Activated CD4-positive, alpha-beta T cell treated with anti-CD3 and anti-CD28 coated beads, Interleukin-2, amount 10 ng/mL, durations not matched to agents 24 days and 14 days (primary cell): ENCODE measurements at regions of chr6 and their contacts with region 1.

Region 1: DNA sequence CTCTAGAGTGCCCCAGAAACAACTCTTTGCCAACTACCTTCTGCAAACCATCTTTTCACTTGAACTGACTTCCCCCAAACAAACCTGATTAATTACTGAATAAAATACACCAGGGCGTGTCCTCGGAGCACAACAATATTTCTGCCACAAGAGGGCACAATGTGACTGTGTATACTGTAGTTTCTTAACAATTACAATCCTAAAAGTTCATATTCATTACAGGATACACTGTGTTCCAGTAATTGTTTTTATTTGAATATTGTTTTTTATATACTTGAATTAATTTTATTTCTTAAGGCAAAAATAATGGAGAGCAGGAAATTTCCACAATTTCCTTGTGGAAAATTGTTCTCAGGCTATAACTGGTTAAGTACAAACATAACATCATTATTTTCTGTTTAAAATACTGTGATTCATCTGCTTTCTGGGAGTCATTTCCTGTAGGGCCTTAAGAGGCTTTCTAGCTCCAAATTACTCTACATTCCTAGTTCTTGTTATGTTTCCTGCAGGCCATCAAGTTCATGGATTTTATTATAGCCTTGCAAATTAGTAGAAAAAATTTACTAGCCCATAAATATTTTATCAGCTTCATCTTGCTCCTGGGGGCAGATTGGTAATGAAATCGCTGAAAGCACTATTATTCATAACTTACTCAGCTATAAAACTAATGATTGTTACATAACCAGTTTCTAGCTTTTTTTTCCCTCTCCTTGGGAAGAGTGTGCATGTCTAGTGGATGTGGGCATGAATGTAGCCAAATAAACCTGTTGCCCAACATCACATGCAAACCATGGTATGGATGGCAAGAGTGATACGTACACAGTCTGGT is 51.9 kb upstream of the SLC22A16 start:
- DNase-seq: peak; percentile 86
- H3K4me3 Mint-ChIP-seq: no peak overlapping the region
- H3K27ac Mint-ChIP-seq: no peak overlapping the region
- H3K4me1 Mint-ChIP-seq: peaks cover 11% of the 10 kb centered on the region
- H3K27me3 Mint-ChIP-seq: no peaks in the 10 kb centered on the region

Region 2: DNA sequence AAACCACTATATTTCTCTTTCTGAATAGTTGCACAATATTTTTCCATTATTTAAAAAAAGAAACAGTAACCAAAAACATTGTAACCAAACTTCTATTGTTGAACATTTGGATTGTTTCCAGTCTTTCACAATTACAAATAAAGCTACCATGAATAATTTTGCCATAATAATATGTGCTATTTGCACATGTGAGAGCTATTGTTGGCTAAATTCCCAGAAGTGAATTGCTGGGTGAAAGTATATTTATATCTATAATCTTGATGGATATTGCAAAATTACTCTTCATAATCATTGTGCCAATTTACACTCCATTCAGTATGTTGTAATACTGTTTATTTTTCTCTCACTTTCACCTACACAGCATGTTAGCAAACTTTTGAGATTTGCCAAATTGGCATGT is 15.3 kb before region 1 on chr6:
- intact Hi-C with region 1: no loop called
- DNase-seq: no peak
- H3K4me3 Mint-ChIP-seq: no peak overlapping the region
- H3K27ac Mint-ChIP-seq: no peak overlapping the region
- H3K4me1 Mint-ChIP-seq: no peaks in the 10 kb centered on the region
- H3K27me3 Mint-ChIP-seq: peaks cover 28% of the 10 kb centered on the region

Region 3: GRCh38 chr6:110543106-110543505 is 14.8 kb after region 1 on chr6:
- intact Hi-C with region 1: no loop called
- DNase-seq: no peak
- H3K4me3 Mint-ChIP-seq: no peak overlapping the region
- H3K27ac Mint-ChIP-seq: no peak overlapping the region
- H3K4me1 Mint-ChIP-seq: peaks cover 13% of the 10 kb centered on the region
- H3K27me3 Mint-ChIP-seq: peaks cover 15% of the 10 kb centered on the region

Region 4: DNA sequence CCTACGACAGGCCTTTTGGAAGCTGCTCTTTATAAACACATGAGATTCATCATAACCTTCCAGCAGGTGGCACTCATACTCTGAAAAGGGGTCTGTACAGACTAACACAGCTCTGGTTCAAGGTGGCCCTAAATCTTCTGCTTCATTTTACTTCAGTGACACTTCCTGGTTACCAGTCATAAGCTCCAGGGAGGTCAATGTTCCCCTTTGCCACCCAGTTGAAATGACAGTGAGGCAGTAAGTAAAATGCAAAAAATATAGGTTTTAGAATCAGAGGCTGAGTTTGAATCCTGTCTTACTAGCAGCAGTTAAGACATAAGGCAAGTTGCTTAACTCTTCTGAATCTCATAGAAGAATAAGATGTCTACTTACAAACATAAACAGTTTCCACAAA is 154.1 kb after region 1 on chr6:
- intact Hi-C with region 1: loop called (anchors 2 kb)
- DNase-seq: peak; percentile 92
- H3K4me3 Mint-ChIP-seq: no peak overlapping the region
- H3K27ac Mint-ChIP-seq: no peak overlapping the region
- H3K4me1 Mint-ChIP-seq: peaks cover 14% of the 10 kb centered on the region
- H3K27me3 Mint-ChIP-seq: no peaks in the 10 kb centered on the region

Region 5: DNA sequence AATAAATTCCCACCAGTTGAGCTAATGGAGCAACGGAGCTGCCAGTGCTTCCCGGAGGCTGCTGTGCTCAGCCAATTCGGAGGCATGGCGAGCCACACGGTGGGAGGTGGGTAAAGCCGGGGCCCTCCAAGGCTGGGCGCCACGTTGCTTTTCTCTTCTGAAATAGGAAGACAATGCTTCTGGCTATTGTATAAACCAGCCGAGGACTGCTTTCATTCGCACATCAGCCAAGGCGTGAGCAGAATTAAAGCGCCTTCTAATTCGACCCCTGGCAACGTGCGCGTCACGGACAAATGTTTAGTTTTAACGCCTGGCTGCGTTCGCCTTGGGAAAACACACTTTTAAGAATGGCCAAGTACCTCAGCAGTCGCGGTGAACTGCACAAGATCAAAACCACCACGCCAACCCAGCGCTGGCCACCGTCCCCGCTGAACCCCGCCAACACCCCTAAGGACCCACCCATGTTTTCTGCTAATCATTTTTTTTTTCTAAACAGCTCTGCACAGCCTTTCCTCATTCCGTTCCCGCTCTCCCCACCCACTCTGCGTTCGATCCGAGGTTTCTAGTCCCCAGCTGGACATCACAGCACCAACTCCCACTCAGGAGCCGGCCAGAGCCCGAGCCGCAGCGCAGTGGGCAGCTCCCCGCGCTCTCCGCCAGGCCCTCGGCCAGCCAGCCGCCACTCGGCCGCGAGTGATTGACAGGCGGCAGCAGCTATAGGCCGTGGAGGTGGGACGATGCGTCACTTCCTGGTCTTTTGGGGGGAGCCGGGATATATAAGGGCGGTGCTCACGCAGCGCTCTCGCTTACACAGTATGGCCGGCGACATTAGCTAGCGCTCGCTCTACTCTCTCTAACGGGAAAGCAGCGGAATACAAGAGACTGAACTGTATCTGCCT is 345.9 kb after region 1 on chr6 and contains the start of gene AMD1:
- intact Hi-C with region 1: loop called (anchors 2 kb)
- DNase-seq: peak; percentile 98
- H3K4me3 Mint-ChIP-seq: peak within 1 kb of the TSS; percentile 98
- H3K27ac Mint-ChIP-seq: peak within 1 kb of the TSS; percentile 99
- H3K4me1 Mint-ChIP-seq: peaks cover 27% of the 10 kb centered on the region
- H3K27me3 Mint-ChIP-seq: no peaks in the 10 kb centered on the region
- total RNA-seq, gene AMD1: 108 and 113 TPM in 2 replicates

Region 6: GRCh38 chr6:110949679-110950285 is 421.5 kb after region 1 on chr6:
- intact Hi-C with region 1: loop called (anchors 1 kb)
- DNase-seq: no peak
- H3K4me3 Mint-ChIP-seq: no peak overlapping the region
- H3K27ac Mint-ChIP-seq: no peak overlapping the region
- H3K4me1 Mint-ChIP-seq: peaks cover 4% of the 10 kb centered on the region
- H3K27me3 Mint-ChIP-seq: peaks cover 8% of the 10 kb centered on the region

Region 7: GRCh38 chr6:110999634-111000270 is 471.4 kb after region 1 on chr6:
- intact Hi-C with region 1: loop called (anchors 2 kb)
- DNase-seq: no peak
- H3K4me3 Mint-ChIP-seq: no peak overlapping the region
- H3K27ac Mint-ChIP-seq: peak overlapping the region; percentile 40
- H3K4me1 Mint-ChIP-seq: peaks cover 7% of the 10 kb centered on the region
- H3K27me3 Mint-ChIP-seq: no peaks in the 10 kb centered on the region

Region 8: DNA sequence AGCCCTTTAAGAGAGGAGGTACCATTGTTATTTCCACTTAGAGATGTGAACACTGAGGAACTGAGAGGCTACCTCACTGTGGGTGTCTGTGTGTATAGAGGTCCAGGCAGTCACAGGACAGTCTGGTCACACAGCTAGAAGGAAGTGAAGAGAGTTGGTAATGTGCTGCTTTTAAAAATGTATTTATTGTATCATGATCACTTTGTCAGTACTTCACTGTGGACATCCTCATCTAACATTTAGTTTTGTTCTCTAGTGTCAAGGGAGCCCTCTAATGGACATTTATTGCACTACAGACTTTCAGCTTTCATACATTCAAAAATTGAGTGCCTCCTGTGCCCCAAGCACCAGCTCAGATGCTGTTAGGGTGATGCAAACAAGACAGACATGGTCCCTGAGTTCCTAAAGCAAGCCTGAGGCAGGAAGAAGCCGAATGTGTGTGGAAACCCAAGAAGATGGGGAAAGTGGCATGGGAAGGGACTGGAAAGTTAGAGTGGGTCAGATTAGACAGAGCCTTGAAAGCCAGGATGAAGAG is 681.9 kb after region 1 on chr6:
- intact Hi-C with region 1: loop called (anchors 5 kb)
- DNase-seq: peak; percentile 81
- H3K4me3 Mint-ChIP-seq: no peak overlapping the region
- H3K27ac Mint-ChIP-seq: no peak overlapping the region
- H3K4me1 Mint-ChIP-seq: no peaks in the 10 kb centered on the region
- H3K27me3 Mint-ChIP-seq: no peaks in the 10 kb centered on the region